ENCODE measurements at regions of chr4 and their contacts with region 1.

Region 1: GRCh38 chr4:98778206-98778605 is 119.8 kb upstream of the TSPAN5 start:
- DNase-seq: no peak

Region 2: GRCh38 chr4:98758182-98758581 is 20.0 kb before region 1 on chr4:
- intact Hi-C with region 1: loop called in 1 of 2 experiments (anchors 1 kb)
- DNase-seq: no peak

Measured in posterior vena cava (tissue), 2 donors.